Caco-2 (cell line): ENCODE measurements at regions of chr10 and their contacts with region 1.

Region 1: GRCh38 chr10:111076191-111076681 is 593 bp upstream of the ADRA2A start:
- DNase-seq: peak; percentile 52 to 80
- H3K4me3 ChIP-seq: peak overlapping the region; percentile 41
- H3K4me3 Mint-ChIP-seq: peak overlapping the region; percentile 75
- H3K27ac Mint-ChIP-seq: no peak overlapping the region
- H3K4me1 ChIP-seq: peaks cover 3% of the 10 kb centered on the region; the same call in 1 of the 2 replicates
- H3K4me1 Mint-ChIP-seq: peaks cover 8% of the 10 kb centered on the region
- H3K27me3 ChIP-seq: no peaks in the 10 kb centered on the region; the same call in 1 of the 2 replicates
- H3K27me3 Mint-ChIP-seq: peaks cover 30% of the 10 kb centered on the region
- CTCF ChIP-seq: peak; percentile 77 to 96

Region 2: DNA sequence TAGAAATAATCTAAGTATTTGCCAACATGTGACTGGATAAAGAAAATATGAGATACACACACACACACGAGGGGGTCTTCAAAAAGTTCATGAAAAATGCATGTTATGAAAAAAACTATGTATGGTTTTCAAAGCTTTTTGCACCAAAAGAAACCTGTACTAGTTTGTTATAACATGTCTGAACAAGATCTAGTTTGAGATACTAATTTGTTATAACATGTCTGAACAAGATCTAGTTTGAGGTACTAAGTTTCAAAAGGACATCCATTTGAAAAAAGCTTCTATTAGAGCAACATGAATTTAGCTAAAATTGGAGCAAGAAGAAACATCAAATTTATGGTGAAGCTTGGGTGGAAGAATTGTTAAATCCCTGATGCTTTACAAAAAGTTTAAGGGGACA is 19.2 kb before region 1 on chr10:
- CTCF ChIA-PET with region 1: no interaction called
- POLR2A ChIA-PET with region 1: no interaction called
- intact Hi-C with region 1: no loop called
- DNase-seq: no peak
- H3K4me3 ChIP-seq: no peak overlapping the region
- H3K4me3 Mint-ChIP-seq: no peak overlapping the region
- H3K27ac Mint-ChIP-seq: no peak overlapping the region
- H3K4me1 ChIP-seq: no peaks in the 10 kb centered on the region
- H3K4me1 Mint-ChIP-seq: no peaks in the 10 kb centered on the region
- H3K27me3 ChIP-seq: no peaks in the 10 kb centered on the region
- H3K27me3 Mint-ChIP-seq: peaks cover 3% of the 10 kb centered on the region
- CTCF ChIP-seq: no peak

Region 3: DNA sequence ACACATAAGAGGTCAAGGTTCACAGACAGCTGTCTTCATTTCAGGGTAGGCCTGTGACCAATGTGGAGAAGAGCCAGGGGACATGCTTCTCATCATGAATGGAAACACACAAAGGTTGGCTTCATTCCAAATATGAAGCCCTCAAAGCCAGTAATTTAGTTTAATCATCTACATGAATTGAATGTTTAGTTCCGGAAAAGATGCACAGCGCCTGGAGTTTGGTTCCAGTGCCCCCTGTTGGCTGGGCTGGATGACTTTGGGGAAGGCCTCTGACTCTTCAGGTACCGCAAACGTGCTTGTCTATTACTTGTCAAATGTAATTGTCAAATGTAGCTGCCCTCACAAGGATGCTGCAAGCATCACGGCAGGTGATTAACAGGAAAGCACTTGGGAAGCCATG is 131.3 kb after region 1 on chr10:
- CTCF ChIA-PET with region 1: no interaction called
- POLR2A ChIA-PET with region 1: no interaction called
- intact Hi-C with region 1: loop called (anchors 10 kb)
- DNase-seq: no peak
- H3K4me3 ChIP-seq: no peak overlapping the region
- H3K4me3 Mint-ChIP-seq: no peak overlapping the region
- H3K27ac Mint-ChIP-seq: no peak overlapping the region
- H3K4me1 ChIP-seq: 0 out of 2 replicates have a peak, but pooled peaks cover 4% of the 10 kb centered on the region
- H3K4me1 Mint-ChIP-seq: no peaks in the 10 kb centered on the region
- H3K27me3 ChIP-seq: no peaks in the 10 kb centered on the region
- H3K27me3 Mint-ChIP-seq: no peaks in the 10 kb centered on the region
- CTCF ChIP-seq: no peak

Region 4: DNA sequence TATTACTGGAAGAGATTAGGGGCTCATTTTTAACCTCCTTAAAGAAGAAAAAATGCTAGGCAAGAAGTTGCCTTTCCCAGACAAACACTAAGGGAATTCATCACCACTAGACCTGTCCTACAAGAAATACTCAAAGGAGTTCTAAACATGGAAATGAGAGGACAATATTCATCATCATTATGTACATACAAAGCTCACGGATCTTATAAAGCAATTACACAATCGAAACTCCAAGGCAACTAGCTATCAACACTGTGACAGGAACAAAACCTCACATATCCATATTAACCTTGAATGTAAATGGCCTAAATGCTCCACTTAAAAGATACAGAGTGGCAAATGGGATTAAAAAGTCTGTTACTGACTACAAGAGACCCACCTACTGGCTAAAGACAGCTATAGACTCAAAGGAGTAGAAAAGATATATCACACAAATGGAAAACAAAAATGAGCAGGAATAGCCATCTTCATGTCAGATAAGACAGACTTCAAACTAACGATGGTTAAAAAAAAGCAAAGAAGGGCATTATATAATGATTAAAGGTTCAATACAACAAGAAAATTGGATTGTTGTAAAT is 247.2 kb after region 1 on chr10:
- CTCF ChIA-PET with region 1: interaction called, 6 read pairs
- POLR2A ChIA-PET with region 1: no interaction called
- intact Hi-C with region 1: loop called (anchors 1 kb)
- DNase-seq: no peak
- H3K4me3 ChIP-seq: no peak overlapping the region
- H3K4me3 Mint-ChIP-seq: no peak overlapping the region
- H3K27ac Mint-ChIP-seq: no peak overlapping the region
- H3K4me1 ChIP-seq: no peaks in the 10 kb centered on the region
- H3K4me1 Mint-ChIP-seq: no peaks in the 10 kb centered on the region
- H3K27me3 ChIP-seq: no peaks in the 10 kb centered on the region
- H3K27me3 Mint-ChIP-seq: peaks cover 3% of the 10 kb centered on the region
- CTCF ChIP-seq: peak in 1 of 2 experiments; percentile 48

Region 5: GRCh38 chr10:111360260-111360925 is 284.2 kb after region 1 on chr10:
- CTCF ChIA-PET with region 1: no interaction called
- POLR2A ChIA-PET with region 1: no interaction called
- intact Hi-C with region 1: loop called (anchors 1 kb)
- DNase-seq: peak; percentile 59 to 66
- H3K4me3 ChIP-seq: no peak overlapping the region
- H3K4me3 Mint-ChIP-seq: no peak overlapping the region
- H3K27ac Mint-ChIP-seq: no peak overlapping the region
- H3K4me1 ChIP-seq: no peaks in the 10 kb centered on the region
- H3K4me1 Mint-ChIP-seq: peaks cover 5% of the 10 kb centered on the region
- H3K27me3 ChIP-seq: no peaks in the 10 kb centered on the region; the same call in 1 of the 2 replicates
- H3K27me3 Mint-ChIP-seq: peaks cover 11% of the 10 kb centered on the region
- CTCF ChIP-seq: peak; percentile 62 to 82

Region 6: DNA sequence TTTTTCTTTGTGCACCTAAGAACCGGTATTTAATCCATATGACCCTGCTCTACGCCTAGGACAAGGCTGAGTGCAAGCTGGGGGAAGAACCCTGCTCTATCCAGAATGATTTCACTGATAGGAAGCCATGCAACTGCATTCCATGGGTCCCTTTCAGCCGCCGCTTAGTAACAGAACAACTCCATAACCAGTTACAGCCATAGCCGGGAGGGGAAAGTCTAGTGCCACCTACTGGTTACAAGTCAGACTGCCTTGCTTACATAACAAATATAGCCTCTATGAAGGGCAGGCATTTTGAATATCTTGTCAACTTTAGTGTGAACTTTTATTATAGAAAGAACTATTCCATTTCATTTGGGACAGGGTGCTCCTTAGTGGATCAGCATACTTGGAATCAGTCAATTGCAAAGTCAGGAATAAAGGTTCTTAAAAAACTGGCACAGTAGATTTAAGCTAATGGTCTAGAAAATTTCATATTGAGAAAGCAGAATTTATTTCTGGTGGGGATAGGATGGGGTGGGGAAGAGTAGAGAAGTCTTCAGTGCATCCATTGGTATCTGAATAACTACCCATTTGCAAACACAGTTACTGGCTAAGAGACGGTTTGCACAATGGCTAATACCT is 522.3 kb after region 1 on chr10:
- CTCF ChIA-PET with region 1: no interaction called
- POLR2A ChIA-PET with region 1: no interaction called
- intact Hi-C with region 1: loop called (anchors 1 kb)
- DNase-seq: peak; percentile 60 to 69
- H3K4me3 ChIP-seq: no peak overlapping the region
- H3K4me3 Mint-ChIP-seq: no peak overlapping the region
- H3K27ac Mint-ChIP-seq: no peak overlapping the region
- H3K4me1 ChIP-seq: no peaks in the 10 kb centered on the region
- H3K4me1 Mint-ChIP-seq: no peaks in the 10 kb centered on the region
- H3K27me3 ChIP-seq: no peaks in the 10 kb centered on the region
- H3K27me3 Mint-ChIP-seq: peaks cover 11% of the 10 kb centered on the region
- CTCF ChIP-seq: peak; percentile 70 to 77